ENCODE measurements at regions of chr19 and their contacts with region 1.

Region 1: GRCh38 chr19:45902651-45903625 is 525 bp upstream of the MYPOP start:
- DNase-seq: peak; percentile 99
- ATAC-seq: peak; percentile 97

Region 2: GRCh38 chr19:45847663-45848062 is 55.3 kb before region 1 on chr19:
- intact Hi-C with region 1: no loop called
- DNase-seq: no peak
- ATAC-seq: no peak

Region 3: GRCh38 chr19:45924891-45925447 is 22.0 kb after region 1 on chr19:
- intact Hi-C with region 1: loop called (anchors 2 kb)
- DNase-seq: no peak
- ATAC-seq: no peak

Region 4: GRCh38 chr19:45994989-45995714 is 92.2 kb after region 1 on chr19 and contains the start of gene CCDC61:
- intact Hi-C with region 1: loop called (anchors 5 kb)
- DNase-seq: peak; percentile 95
- ATAC-seq: peak; percentile 98
- total RNA-seq, gene CCDC61: 6.8 TPM

Measured in Right ventricle myocardium superior (tissue), 1 donor.